ENCODE measurements at regions of chrX and their contacts with region 1.

Region 1: DNA sequence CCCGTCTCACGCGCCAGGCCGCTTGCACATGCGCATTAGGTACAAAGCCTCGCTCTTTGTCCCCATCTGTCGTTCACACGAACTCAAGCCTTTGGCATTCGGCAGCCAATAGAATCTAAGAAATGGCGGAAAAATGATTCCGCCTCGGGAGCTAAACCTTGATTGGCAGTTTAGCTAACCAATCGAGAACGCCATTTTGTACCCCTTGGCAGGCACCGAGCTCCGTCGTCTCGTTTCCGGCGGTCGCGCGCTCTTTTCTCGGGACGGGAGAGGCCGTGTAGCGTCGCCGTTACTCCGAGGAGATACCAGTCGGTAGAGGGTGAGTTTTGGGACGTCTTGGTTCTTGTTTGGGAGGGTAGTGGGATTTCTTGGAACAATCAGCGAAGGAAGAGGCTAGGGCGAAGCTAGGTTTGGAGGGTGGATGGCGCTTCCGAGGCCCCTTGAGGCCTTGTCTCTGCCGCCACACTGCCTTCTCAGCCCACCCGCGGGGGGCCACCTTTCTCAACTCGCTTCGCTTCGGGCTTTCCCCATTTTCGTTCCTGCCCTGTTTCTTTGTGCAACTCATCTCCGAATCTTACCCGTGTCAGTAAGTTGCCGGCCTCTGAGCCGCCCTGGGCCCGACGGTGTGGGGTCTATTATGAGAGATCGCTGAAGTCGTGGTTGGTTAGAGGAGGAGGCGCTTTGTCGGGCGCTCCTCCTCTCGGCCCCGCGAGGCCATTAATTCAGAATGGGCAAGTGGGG is at the start of gene NONO:
- DNase-seq: peak; percentile 91
- H3K4me3 Mint-ChIP-seq: peak within 1 kb of the TSS; percentile 88
- H3K27ac Mint-ChIP-seq: peak within 1 kb of the TSS; percentile 97
- H3K4me1 Mint-ChIP-seq: peaks cover 8% of the 10 kb centered on the region
- H3K27me3 Mint-ChIP-seq: no peaks in the 10 kb centered on the region
- total RNA-seq, gene NONO: 490 to 531 TPM

Region 2: GRCh38 chrX:71017389-71017944 is 266.1 kb before region 1 on chrX:
- CTCF ChIA-PET with region 1: no interaction called
- intact Hi-C with region 1: no loop called
- DNase-seq: no peak
- H3K4me3 Mint-ChIP-seq: no peak overlapping the region
- H3K27ac Mint-ChIP-seq: no peak overlapping the region
- H3K4me1 Mint-ChIP-seq: no peaks in the 10 kb centered on the region
- H3K27me3 Mint-ChIP-seq: no peaks in the 10 kb centered on the region

Region 3: DNA sequence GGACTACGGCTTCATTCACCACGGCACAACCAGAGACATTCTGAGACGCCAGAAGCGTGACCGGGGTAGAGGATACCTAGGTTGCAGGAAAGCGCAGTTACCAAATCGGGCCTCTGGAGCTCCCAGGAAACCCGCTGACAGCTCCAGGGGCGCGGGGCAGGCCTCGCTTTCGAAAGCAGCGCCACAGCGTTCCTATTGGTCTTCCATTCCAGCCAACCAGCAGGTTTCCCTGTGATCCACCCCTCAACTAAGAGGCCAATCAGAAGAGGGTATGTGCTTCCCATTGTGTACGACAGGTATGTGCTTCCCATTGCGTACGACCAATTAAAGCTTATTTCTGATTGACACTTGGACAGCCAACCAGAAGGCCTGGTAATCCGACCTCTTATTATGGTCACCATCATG is 230.4 kb before region 1 on chrX:
- CTCF ChIA-PET with region 1: no interaction called
- intact Hi-C with region 1: no loop called
- DNase-seq: peak; percentile 19
- H3K4me3 Mint-ChIP-seq: peak overlapping the region; percentile 15
- H3K27ac Mint-ChIP-seq: no peak overlapping the region
- H3K4me1 Mint-ChIP-seq: peaks cover 14% of the 10 kb centered on the region
- H3K27me3 Mint-ChIP-seq: no peaks in the 10 kb centered on the region

Region 4: GRCh38 chrX:71068049-71068763 is 215.4 kb before region 1 on chrX and contains the start of gene SNX12:
- CTCF ChIA-PET with region 1: no interaction called
- intact Hi-C with region 1: loop called (anchors 1 kb)
- DNase-seq: peak; percentile 93
- H3K4me3 Mint-ChIP-seq: peak within 1 kb of the TSS; percentile 96
- H3K27ac Mint-ChIP-seq: peak within 1 kb of the TSS; percentile 94
- H3K4me1 Mint-ChIP-seq: peaks cover 19% of the 10 kb centered on the region
- H3K27me3 Mint-ChIP-seq: no peaks in the 10 kb centered on the region
- total RNA-seq, gene SNX12: 32.9 to 35.2 TPM

Region 5: DNA sequence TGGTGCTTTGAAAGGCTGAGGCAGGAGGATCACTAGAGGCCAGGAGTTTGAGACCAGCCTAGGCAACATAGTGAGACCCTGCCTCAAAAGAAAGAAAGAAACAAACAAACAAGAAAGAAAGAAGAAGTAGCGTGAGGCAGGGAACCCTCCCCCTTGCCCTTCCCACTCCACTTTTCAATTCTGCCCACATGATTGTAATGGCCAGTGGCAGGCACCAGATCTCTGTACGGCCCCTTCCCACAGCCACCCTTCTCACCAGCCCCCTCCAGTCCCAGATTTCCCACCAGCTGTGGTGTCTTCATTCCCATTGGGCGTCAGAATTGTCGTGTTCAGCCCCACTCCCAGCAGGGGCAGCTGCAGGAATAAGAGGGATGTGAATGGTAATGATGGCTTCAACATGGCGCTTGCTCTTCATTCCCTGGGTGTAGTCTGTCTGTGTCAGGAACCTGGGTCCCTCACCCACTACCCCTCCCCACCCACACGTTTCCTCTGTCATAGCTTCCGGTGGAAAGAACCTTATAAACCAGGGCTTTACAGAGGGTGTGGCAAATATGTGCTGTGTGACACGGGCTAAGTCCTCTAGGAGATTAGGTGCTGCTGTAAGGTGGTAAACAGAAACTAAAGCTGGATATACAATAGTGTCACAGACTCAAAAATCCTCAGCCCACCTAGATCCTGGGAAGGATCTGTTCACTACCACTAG is 172.3 kb before region 1 on chrX and contains the start of gene IL2RG:
- CTCF ChIA-PET with region 1: interaction called, 5 read pairs
- intact Hi-C with region 1: loop called (anchors 2 kb)
- DNase-seq: peak; percentile 87
- H3K4me3 Mint-ChIP-seq: peak within 1 kb of the TSS; percentile 93
- H3K27ac Mint-ChIP-seq: peak within 1 kb of the TSS; percentile 95
- H3K4me1 Mint-ChIP-seq: peaks cover 37% of the 10 kb centered on the region
- H3K27me3 Mint-ChIP-seq: no peaks in the 10 kb centered on the region
- total RNA-seq, gene IL2RG: 144 to 148 TPM

Region 6: GRCh38 chrX:71254092-71254941 is 29.3 kb before region 1 on chrX and contains the start of gene ZMYM3:
- CTCF ChIA-PET with region 1: interaction called, 3 read pairs
- intact Hi-C with region 1: loop called (anchors 1 kb)
- DNase-seq: peak; percentile 70
- H3K4me3 Mint-ChIP-seq: peak within 1 kb of the TSS; percentile 87
- H3K27ac Mint-ChIP-seq: peak within 1 kb of the TSS; percentile 76
- H3K4me1 Mint-ChIP-seq: peaks cover 29% of the 10 kb centered on the region
- H3K27me3 Mint-ChIP-seq: no peaks in the 10 kb centered on the region
- total RNA-seq, gene ZMYM3: 7.7 to 8.2 TPM

Region 7: DNA sequence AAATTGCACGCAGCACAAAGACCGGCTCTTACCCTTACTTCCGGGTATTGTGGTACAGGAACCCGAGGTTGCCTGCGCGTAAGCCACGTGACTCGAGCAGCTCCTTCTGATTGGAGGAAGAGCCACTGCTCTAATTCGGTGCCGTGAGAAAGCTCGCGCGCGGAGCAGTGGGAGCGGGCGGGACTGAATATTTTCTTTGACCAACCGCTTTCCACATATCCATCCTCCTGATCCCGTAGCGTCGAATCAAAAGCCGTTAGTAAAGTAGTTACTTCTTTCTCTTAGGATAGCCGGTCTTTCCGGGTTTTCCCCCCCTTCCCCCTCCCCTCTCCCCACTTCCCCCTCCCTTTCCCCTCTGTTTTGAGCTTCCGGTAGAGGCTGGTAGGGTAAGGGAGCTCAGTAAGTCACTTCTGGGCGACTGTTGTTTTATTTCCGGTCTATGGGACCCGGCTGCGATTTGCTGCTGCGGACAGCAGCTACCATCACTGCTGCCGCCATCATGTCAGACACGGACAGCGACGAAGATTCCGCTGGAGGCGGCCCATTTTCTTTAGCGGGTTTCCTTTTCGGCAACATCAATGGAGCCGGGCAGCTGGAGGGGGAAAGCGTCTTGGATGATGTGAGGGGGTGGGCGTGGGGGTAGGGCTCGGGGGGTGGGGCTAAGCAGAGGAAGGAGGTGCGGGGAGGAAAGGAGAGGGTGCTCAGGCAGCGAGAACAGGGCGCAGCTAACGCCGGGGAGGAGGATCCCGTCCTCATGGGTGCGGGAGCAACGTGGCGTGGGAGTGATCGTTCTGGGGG is 82.5 kb after region 1 on chrX and contains the start of gene TAF1:
- CTCF ChIA-PET with region 1: no interaction called
- intact Hi-C with region 1: loop called (anchors 1 kb)
- DNase-seq: peak; percentile 96
- H3K4me3 Mint-ChIP-seq: peak within 1 kb of the TSS; percentile 98
- H3K27ac Mint-ChIP-seq: peak within 1 kb of the TSS; percentile 99
- H3K4me1 Mint-ChIP-seq: peaks cover 25% of the 10 kb centered on the region
- H3K27me3 Mint-ChIP-seq: no peaks in the 10 kb centered on the region
- total RNA-seq, gene TAF1: 24.0 to 27.2 TPM

Region 8: GRCh38 chrX:71541210-71542022 is 257.8 kb after region 1 on chrX:
- CTCF ChIA-PET with region 1: no interaction called
- intact Hi-C with region 1: loop called (anchors 2 kb)
- DNase-seq: peak; percentile 39
- H3K4me3 Mint-ChIP-seq: peak overlapping the region; percentile 96
- H3K27ac Mint-ChIP-seq: peak overlapping the region; percentile 93
- H3K4me1 Mint-ChIP-seq: peaks cover 60% of the 10 kb centered on the region
- H3K27me3 Mint-ChIP-seq: no peaks in the 10 kb centered on the region